Endothelial cell of umbilical vein (primary cell): ENCODE measurements at regions of chr9 and their contacts with region 1.

Region 1: DNA sequence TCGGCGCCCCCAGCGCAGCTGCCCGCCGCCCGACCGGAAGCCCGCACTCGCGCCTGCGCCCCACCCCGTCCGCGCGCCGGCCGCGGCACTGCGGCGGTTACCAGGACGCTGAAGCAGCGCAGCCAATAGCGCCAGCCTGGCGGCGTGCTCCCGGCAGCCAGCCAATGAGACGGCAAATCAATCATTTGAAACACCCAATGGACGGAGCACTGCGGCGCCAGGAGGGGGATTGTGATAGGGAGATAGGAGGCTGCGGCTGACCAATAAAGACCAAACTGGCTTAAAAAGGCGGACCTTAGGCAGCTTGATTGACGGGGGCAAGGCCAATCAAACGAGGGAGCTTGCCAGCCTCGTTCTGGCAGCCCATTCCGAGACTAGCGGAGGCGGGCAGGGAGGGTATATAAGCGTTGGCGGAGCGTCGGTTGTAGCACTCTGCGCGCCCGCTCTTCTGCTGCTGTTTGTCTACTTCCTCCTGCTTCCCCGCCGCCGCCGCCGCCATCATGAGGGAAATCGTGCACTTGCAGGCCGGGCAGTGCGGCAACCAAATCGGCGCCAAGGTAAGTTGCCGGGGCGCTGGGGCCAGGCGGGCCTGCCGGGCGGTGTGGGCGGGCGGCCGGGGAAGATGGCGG is at the start of gene TUBB4B:
- DNase-seq: peak; percentile 100
- H3K4me3 ChIP-seq: peak within 1 kb of the TSS; percentile 70 to 76 (median 73)
- H3K27ac ChIP-seq: peak within 1 kb of the TSS; percentile 71
- H3K4me1 ChIP-seq: peaks cover 13% of the 10 kb centered on the region
- H3K27me3 ChIP-seq: no peaks in the 10 kb centered on the region
- CTCF ChIP-seq: no peak
- POLR2A ChIP-seq: peak; percentile 99
- total RNA-seq, gene TUBB4B: 546 and 558 TPM in 2 replicates

Region 2: DNA sequence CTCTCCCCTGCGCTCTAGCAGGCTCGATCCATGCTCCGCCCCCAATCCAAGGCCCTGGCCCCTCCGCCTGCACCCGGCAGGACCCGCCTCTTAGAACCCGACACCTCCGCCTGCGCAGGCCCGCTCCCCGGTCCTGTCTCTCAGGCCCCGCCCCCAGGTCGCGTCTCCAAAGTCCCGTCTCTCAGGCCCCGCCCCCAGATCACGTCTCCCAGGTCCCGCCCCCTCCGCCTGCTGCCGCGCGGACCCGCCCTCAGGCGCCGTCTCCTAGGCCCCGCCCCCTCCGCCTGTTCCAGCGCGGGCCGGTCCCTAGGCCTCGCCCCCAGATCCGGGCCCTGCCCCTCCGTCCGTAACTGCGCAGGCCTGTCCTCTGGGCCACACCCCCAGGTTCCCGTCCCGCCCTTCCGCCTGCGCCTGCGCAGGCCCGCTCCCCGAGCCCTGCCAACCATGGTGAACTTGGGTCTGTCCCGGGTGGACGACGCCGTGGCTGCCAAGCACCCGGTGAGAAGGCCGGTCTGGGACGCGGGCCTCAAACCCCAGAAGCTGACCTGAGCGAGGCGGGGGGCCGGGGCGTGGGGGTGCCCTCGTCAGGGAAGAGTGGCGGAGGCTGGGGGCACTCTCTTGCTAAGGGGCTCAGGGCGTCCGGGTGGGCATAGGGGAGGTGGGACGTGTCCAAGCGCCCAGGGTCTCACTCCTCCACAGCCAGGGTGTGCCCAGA is 449.9 kb before region 1 on chr9 and contains the start of gene TMEM141:
- CTCF ChIA-PET with region 1: interaction called, 3 read pairs
- POLR2A ChIA-PET with region 1: no interaction called
- dilution Hi-C with region 1: no loop called
- intact Hi-C with region 1: loop called (anchors 5 kb)
- DNase-seq: peak; percentile 99
- H3K4me3 ChIP-seq: peak within 1 kb of the TSS; percentile 54 to 72 (median 59)
- H3K27ac ChIP-seq: peak within 1 kb of the TSS; percentile 31
- H3K4me1 ChIP-seq: peaks cover 7% of the 10 kb centered on the region
- H3K27me3 ChIP-seq: peaks cover 2 to 6% of the 10 kb centered on the region in 2 experiments
- CTCF ChIP-seq: no peak
- POLR2A ChIP-seq: peak; percentile 89
- total RNA-seq, gene TMEM141: 43.2 and 44.9 TPM in 2 replicates

Region 3: GRCh38 chr9:137086531-137087408 is 154.2 kb before region 1 on chr9 and contains the start of gene MAN1B1:
- CTCF ChIA-PET with region 1: interaction called, 9 read pairs
- POLR2A ChIA-PET with region 1: interaction called, 10 read pairs
- dilution Hi-C with region 1: no loop called
- intact Hi-C with region 1: no loop called
- DNase-seq: peak; percentile 100
- H3K4me3 ChIP-seq: peak within 1 kb of the TSS; percentile 42 to 62 (median 47)
- H3K27ac ChIP-seq: peak within 1 kb of the TSS; percentile 48
- H3K4me1 ChIP-seq: peaks cover 28% of the 10 kb centered on the region
- H3K27me3 ChIP-seq: no peaks in the 10 kb centered on the region
- CTCF ChIP-seq: no peak
- POLR2A ChIP-seq: peak; percentile 89
- total RNA-seq, gene MAN1B1: 67.7 and 75.3 TPM in 2 replicates

Region 4: GRCh38 chr9:137136261-137136880 is 104.6 kb before region 1 on chr9:
- CTCF ChIA-PET with region 1: interaction called, 17 read pairs
- POLR2A ChIA-PET with region 1: interaction called, 3 read pairs
- dilution Hi-C with region 1: no loop called
- intact Hi-C with region 1: no loop called
- DNase-seq: no peak
- H3K4me3 ChIP-seq: no peak overlapping the region
- H3K27ac ChIP-seq: no peak overlapping the region
- H3K4me1 ChIP-seq: no peaks in the 10 kb centered on the region
- H3K27me3 ChIP-seq: peaks cover 35 to 36% of the 10 kb centered on the region in 2 experiments
- CTCF ChIP-seq: no peak
- POLR2A ChIP-seq: no peak

Region 5: DNA sequence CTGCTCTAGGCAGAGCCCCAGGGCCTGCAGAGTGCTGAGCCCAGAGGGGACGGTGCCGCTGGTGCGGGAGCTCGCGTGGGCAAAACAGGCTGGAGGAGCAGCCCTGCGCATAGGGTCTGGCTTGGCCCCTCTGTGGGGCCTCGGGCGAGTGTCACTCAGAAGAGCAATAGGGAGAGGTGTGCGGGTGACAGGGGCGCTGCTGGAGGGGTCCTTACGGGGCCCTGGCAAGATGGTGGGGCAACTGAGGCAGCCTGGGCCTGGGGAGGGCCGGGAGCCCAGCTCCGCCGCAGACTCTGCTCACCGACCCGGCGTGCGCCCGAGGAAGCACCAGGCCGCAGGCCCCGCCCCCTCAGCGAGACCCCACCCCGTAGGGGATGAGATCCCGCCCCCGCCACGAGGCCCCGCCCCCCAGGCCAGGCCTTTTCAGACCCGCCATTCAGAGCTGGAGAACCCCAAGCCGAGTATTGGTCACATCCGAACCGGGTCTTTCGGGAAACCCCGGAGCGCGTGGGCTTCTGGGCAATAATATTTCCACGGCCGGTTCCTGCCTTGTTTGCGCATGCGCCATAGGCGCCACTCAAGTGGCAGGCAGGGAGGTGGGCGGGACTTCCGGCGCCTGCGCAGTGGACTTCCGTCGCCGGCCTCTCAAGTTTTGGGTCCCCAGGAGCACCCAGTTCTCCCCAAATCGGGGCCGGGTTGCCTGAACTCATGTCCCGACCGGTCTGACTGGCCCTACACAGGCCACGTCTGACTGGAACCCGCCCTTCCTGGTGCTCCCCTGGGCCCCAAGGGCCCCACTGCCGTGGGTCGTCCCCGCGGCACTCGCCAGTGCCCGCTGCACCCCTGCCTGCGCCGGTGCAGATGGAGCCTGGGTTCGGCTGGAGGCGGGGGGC is 17.7 kb before region 1 on chr9:
- CTCF ChIA-PET with region 1: interaction called, 63 read pairs
- POLR2A ChIA-PET with region 1: interaction called, 8 read pairs
- dilution Hi-C with region 1: no loop called
- intact Hi-C with region 1: loop called (anchors 1 kb)
- DNase-seq: peak; percentile 98
- H3K4me3 ChIP-seq: peak overlapping the region; percentile 80 to 91 (median 82)
- H3K27ac ChIP-seq: peak overlapping the region; percentile 68
- H3K4me1 ChIP-seq: peaks cover 18% of the 10 kb centered on the region
- H3K27me3 ChIP-seq: no peaks in the 10 kb centered on the region
- CTCF ChIP-seq: no peak
- POLR2A ChIP-seq: peak; percentile 78

Region 6: DNA sequence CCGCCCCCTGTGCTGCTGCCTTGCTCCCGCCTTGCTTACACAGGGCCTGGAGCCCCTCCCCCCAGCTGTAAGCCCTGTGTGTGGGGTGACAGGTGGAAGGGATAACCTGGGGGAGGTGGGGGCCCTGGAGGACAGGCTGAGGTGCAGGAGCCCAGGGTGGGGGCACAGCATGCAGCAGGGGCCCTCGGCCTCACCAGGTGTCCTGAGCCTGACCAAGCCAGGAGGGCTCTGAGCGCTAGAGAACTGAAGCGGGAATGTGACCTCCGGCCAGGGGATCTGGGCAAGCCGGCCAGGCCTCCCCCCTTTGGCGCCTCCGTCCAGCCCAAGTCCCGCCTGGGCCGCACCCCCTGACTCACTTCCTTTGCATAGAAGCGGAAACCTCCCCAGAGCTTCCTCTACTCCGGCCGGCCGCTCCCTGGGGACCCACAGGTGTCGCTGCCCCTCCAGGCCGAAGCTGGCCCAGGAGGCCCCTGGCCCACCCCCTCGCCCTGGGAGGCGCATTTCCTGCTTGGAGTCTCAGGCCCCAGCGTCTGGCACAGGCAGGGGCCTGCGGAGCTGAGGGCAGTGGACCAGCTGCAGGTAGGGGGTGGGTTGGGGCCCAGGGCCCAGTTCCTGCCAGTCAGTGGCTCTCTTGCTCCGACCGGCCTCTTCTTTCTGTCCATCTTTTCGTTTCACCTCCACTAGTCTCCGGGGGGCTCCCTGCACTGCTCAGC is 36.5 kb after region 1 on chr9 and contains the start of gene TOR4A:
- CTCF ChIA-PET with region 1: interaction called, 12 read pairs
- POLR2A ChIA-PET with region 1: interaction called, 10 read pairs
- dilution Hi-C with region 1: no loop called
- intact Hi-C with region 1: loop called (anchors 1 kb)
- DNase-seq: peak; percentile 93
- H3K4me3 ChIP-seq: peak within 1 kb of the TSS; percentile 39 to 60 (median 51)
- H3K27ac ChIP-seq: peak within 1 kb of the TSS; percentile 91
- H3K4me1 ChIP-seq: peaks cover 25% of the 10 kb centered on the region
- H3K27me3 ChIP-seq: no peaks in the 10 kb centered on the region
- CTCF ChIP-seq: peak; percentile 29 to 39
- POLR2A ChIP-seq: peak; percentile 95
- total RNA-seq, gene TOR4A: 46.4 and 48.0 TPM in 2 replicates

Region 7: GRCh38 chr9:137578518-137579258 is 337.7 kb after region 1 on chr9 and contains the start of gene DPH7:
- CTCF ChIA-PET with region 1: no interaction called
- POLR2A ChIA-PET with region 1: no interaction called
- dilution Hi-C with region 1: no loop called
- intact Hi-C with region 1: no loop called
- DNase-seq: peak; percentile 91
- H3K4me3 ChIP-seq: peak within 1 kb of the TSS; percentile 77 to 94 (median 83)
- H3K27ac ChIP-seq: peak within 1 kb of the TSS; percentile 22
- H3K4me1 ChIP-seq: peaks cover 14% of the 10 kb centered on the region
- H3K27me3 ChIP-seq: no peaks in the 10 kb centered on the region
- CTCF ChIP-seq: peak; percentile 97 to 98
- POLR2A ChIP-seq: peak; percentile 62
- total RNA-seq, gene DPH7: 43.2 TPM in 2 replicates